ENCODE measurements at regions of chr3 and their contacts with region 1.

Region 1: DNA sequence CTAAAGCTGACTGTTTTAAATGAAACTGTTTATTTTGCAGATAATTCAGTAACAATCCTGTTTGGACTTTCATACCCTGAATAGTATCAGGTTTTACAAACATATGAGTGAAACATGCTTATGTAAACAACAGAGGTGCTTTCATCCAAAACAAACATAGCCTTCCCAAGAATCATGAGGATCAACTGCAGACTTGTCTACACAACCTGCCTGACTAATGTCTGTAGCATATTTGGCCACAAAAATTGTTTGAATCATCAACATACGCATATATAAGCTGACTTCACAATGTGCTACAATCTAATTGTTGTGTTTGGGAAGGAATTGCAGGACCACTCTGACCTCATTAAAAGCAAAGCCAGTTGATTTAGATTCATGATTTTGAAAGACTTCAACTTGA is 190.5 kb downstream of the DIPK2A start:
- DNase-seq: peak; percentile 72
- H3K4me3 ChIP-seq: no peak overlapping the region
- H3K27ac ChIP-seq: no peak overlapping the region
- H3K4me1 ChIP-seq: no peaks in the 10 kb centered on the region
- H3K27me3 ChIP-seq: no peaks in the 10 kb centered on the region
- CTCF ChIP-seq: no peak

Region 2: GRCh38 chr3:143901105-143901504 is 261.0 kb before region 1 on chr3:
- CTCF ChIA-PET with region 1: no interaction called
- dilution Hi-C with region 1: no loop called
- in situ Hi-C with region 1: no loop called
- intact Hi-C with region 1: loop called (anchors 10 kb)
- DNase-seq: peak; percentile 86
- H3K4me3 ChIP-seq: no peak overlapping the region
- H3K27ac ChIP-seq: no peak overlapping the region
- H3K4me1 ChIP-seq: peaks cover 16% of the 10 kb centered on the region
- H3K27me3 ChIP-seq: no peaks in the 10 kb centered on the region
- CTCF ChIP-seq: no peak

Region 3: GRCh38 chr3:144200466-144200865 is 38.4 kb after region 1 on chr3:
- CTCF ChIA-PET with region 1: no interaction called
- dilution Hi-C with region 1: no loop called
- in situ Hi-C with region 1: no loop called
- intact Hi-C with region 1: no loop called
- DNase-seq: no peak
- H3K4me3 ChIP-seq: no peak overlapping the region
- H3K27ac ChIP-seq: no peak overlapping the region
- H3K4me1 ChIP-seq: no peaks in the 10 kb centered on the region
- H3K27me3 ChIP-seq: no peaks in the 10 kb centered on the region
- CTCF ChIP-seq: no peak

Region 4: GRCh38 chr3:144221761-144222160 is 59.7 kb after region 1 on chr3:
- CTCF ChIA-PET with region 1: no interaction called
- dilution Hi-C with region 1: no loop called
- in situ Hi-C with region 1: no loop called
- intact Hi-C with region 1: no loop called
- DNase-seq: no peak
- H3K4me3 ChIP-seq: no peak overlapping the region
- H3K27ac ChIP-seq: no peak overlapping the region
- H3K4me1 ChIP-seq: no peaks in the 10 kb centered on the region
- H3K27me3 ChIP-seq: no peaks in the 10 kb centered on the region
- CTCF ChIP-seq: no peak

Region 5: DNA sequence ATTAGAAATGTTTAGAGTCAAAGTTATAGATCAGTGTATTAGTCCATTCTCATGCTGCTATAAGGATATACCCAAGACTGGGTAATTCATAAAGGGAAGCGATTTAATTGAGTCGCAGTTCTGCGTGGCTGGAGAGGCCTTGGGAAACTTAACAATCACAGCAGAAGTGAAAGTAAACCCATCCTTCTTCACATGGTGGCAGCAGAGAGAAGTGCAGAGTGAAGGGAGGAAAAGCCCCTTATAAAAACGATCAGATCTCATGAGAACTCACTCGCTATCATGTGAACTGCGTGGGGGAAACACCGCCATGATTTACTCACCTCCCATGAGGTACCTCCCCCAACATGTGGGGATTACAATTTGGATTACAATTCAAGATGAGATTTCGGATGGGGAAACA is 681.0 kb after region 1 on chr3:
- CTCF ChIA-PET with region 1: no interaction called
- dilution Hi-C with region 1: no loop called
- in situ Hi-C with region 1: no loop called
- intact Hi-C with region 1: no loop called
- DNase-seq: no peak
- H3K4me3 ChIP-seq: no peak overlapping the region
- H3K27ac ChIP-seq: no peak overlapping the region
- H3K4me1 ChIP-seq: no peaks in the 10 kb centered on the region
- H3K27me3 ChIP-seq: no peaks in the 10 kb centered on the region
- CTCF ChIP-seq: peak in 1 of 2 donors; percentile 14